Activated B cell treated with CpG ODN at 0.5 μM for 24 hours (primary cell): ENCODE measurements at regions of chr16 and their contacts with region 1.

Region 1: GRCh38 chr16:67428146-67428731 is 2.7 kb upstream of the HSD11B2 start:
- DNase-seq: peak; percentile 51
- ATAC-seq: peak; percentile 76
- H3K4me3 Mint-ChIP-seq: no peak overlapping the region
- H3K27ac Mint-ChIP-seq: no peak overlapping the region
- H3K4me1 Mint-ChIP-seq: peaks cover 19% of the 10 kb centered on the region
- H3K27me3 Mint-ChIP-seq: peaks cover 37% of the 10 kb centered on the region
- CTCF ChIP-seq: peak; percentile 65

Region 2: DNA sequence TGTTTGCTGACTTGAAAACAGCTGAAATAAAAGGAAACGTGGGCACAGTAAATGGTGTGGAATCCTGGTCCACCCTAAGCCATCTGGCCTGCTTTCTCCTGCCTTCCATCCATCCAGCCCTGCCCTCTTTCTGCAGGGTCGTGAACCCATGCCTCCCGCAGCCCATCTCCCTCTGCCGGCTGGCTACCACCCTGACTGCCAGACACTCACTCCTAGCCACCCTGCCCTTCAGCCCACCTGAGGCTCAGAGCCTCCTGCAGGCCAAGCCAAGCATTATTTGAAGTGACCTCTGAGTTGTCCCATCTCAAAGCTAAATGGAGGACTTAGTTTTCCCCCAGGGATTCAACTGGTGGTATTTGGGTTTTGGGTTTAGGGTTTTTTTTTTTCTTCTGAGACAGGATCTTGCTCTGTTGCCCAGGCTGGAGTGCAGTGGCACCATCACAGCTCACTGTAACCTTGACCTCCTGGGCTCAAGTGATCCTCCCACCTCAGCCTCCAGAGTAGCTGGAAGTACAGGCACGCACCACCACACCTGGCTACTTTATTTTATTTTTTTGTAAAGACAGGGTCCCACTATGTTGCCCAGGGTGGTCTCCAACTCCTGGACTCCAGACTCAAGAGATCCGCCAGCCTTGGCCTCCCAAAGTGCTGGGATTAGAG is 20.3 kb before region 1 on chr16:
- CTCF ChIA-PET with region 1: no interaction called
- POLR2A ChIA-PET with region 1: no interaction called
- intact Hi-C with region 1: no loop called
- DNase-seq: no peak
- ATAC-seq: no peak
- H3K4me3 Mint-ChIP-seq: no peak overlapping the region
- H3K27ac Mint-ChIP-seq: no peak overlapping the region
- H3K4me1 Mint-ChIP-seq: no peaks in the 10 kb centered on the region
- H3K27me3 Mint-ChIP-seq: peaks cover 1% of the 10 kb centered on the region
- CTCF ChIP-seq: no peak

Region 3: DNA sequence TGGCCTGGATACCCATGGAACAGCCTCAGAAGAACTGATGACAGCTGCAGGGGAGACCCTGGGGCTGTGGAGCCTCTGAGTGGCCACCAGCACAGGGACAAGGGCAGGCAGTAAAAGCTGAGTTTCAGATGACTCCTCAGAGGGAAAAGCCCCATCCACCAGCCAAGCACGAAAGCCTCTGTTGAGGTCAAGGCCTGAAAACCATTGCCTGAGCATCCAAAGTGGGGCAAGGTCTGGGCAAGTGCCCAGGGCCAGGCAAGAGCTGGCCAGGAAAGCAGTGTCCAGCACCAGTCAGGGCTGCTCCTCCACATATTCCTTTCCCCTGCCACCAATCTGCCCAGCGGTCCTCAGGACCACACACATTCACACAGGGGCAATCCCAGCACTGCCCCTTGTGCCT is 36.3 kb after region 1 on chr16:
- CTCF ChIA-PET with region 1: interaction called, 63 read pairs
- POLR2A ChIA-PET with region 1: interaction called, 10 read pairs
- intact Hi-C with region 1: loop called (anchors 1 kb)
- DNase-seq: no peak
- ATAC-seq: no peak
- H3K4me3 Mint-ChIP-seq: no peak overlapping the region
- H3K27ac Mint-ChIP-seq: no peak overlapping the region
- H3K4me1 Mint-ChIP-seq: peaks cover 39% of the 10 kb centered on the region
- H3K27me3 Mint-ChIP-seq: no peaks in the 10 kb centered on the region
- CTCF ChIP-seq: no peak